PC-3 (cell line): ENCODE measurements at regions of chr17 and their contacts with region 1.

Region 1: DNA sequence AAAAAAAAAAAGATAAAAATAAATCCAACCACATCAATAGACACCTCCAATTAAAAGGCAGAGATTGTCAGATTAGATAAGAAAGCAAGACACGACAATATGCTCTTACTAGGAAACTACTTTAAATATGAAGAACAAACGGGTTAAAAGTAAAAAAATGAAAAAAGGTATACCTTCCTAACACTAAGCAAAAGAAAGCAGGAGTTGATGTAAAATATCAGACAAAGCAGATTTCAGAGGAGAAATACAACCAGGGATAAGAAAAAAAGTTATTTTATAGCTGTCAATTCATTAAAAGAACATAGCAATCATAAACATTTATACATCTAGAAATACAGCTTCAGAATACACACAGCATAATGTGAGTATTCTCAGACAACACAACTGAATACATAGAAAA is 49.7 kb upstream of the CCDC182 start:
- DNase-seq: no peak
- ATAC-seq: no peak
- H3K4me3 ChIP-seq: no peak overlapping the region
- H3K27ac ChIP-seq: no peak overlapping the region
- H3K4me1 ChIP-seq: no peaks in the 10 kb centered on the region
- H3K27me3 ChIP-seq: peaks cover 43% of the 10 kb centered on the region
- CTCF ChIP-seq: no peak

Region 2: DNA sequence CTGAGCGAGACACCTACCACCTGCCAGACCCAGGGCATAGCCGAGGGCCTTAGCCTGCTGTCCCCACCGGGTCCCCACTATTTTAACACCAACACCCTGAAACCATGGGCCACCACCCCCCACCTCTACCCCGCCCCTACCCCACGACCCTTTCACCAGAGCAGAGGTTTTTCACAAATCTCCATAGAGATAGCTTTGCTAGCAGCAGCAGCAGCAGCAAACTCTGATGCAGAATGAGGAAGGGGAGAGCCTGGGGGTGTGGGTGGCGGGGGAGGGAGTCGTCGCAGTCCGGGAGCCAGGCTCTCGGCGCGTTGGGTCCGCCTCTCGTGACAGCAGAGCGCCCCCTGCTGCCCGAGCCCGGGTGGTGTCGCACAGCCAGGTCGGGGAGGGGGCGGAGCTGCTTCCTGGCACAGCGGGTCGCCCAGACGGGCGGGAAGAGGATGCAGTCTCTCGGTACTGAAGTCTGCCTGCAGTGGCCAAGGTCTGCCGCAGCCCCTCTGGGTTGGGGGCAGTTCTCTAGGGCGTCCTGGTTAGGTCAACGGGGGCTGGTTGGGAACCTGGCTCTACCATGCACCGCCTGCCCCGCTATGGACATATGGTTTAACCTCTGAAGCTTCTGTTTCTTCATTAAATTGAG is 11.6 kb before region 1 on chr17:
- CTCF ChIA-PET with region 1: interaction called, 3 read pairs
- POLR2A ChIA-PET with region 1: interaction called, 16 read pairs
- intact Hi-C with region 1: no loop called
- DNase-seq: peak; percentile 79
- ATAC-seq: peak; percentile 90
- H3K4me3 ChIP-seq: no peak overlapping the region
- H3K27ac ChIP-seq: no peak overlapping the region
- H3K4me1 ChIP-seq: no peaks in the 10 kb centered on the region
- H3K27me3 ChIP-seq: peaks cover 45% of the 10 kb centered on the region
- CTCF ChIP-seq: peak; percentile 98